Gastrocnemius medialis (tissue), 4 donors: ENCODE measurements at regions of chr1 and their contacts with region 1.

Region 1: DNA sequence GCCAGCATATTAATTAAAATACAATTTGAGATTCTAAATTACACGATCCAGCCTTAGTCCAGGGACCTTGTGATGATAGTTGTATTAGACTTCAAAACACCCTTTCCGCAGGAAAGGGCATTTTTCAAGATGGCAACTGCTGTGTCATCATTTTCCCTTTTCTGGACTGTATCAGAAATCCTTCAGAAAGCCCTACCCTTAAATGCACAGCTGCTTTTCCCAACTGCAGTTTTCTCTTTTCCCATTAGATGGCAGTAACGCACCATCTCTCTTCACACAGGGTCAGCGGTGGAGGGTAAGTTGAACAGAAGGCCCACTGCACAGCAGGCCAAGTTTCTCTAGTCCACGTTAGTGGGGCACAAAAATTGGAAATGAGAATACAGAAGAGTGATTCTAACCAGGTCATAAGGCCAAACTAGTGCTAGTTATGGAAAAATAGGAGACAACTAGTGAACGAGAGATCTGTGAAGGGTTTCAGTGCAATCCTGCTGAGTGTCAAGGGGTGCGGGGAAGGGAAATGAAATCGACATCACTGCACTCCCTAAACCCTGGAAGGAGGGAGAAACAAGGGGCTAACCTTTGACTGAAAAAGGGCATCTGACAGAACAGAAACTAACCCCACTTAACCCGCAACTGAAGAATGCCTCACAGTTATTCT is 22.1 kb upstream of the TDRD10 start:
- DNase-seq: peak in 1 of 2 donors; percentile 52
- ATAC-seq: peak; percentile 87 to 95
- H3K4me3 ChIP-seq: no peak overlapping the region
- H3K27ac ChIP-seq: no peak overlapping the region
- H3K4me1 ChIP-seq: peaks cover 0 to 11% of the 10 kb centered on the region in 2 donors
- H3K27me3 ChIP-seq: no peaks in the 10 kb centered on the region
- CTCF ChIP-seq: peak; percentile 79 to 94 (median 88)
- POLR2A ChIP-seq: no peak

Region 2: GRCh38 chr1:154304664-154305337 is 175.1 kb before region 1 on chr1:
- in situ Hi-C with region 1: no loop called
- intact Hi-C with region 1: no loop called
- DNase-seq: no peak
- ATAC-seq: no peak
- H3K4me3 ChIP-seq: no peak overlapping the region
- H3K27ac ChIP-seq: no peak overlapping the region
- H3K4me1 ChIP-seq: no peaks in the 10 kb centered on the region
- H3K27me3 ChIP-seq: no peaks in the 10 kb centered on the region
- CTCF ChIP-seq: no peak
- POLR2A ChIP-seq: no peak

Region 3: GRCh38 chr1:154546264-154547063 is 66.6 kb after region 1 on chr1:
- in situ Hi-C with region 1: loop called (anchors 5 to 10 kb)
- intact Hi-C with region 1: loop called (anchors 1 kb)
- DNase-seq: peak in 1 of 2 donors; percentile 43
- ATAC-seq: peak; percentile 48 to 86
- H3K4me3 ChIP-seq: no peak overlapping the region
- H3K27ac ChIP-seq: no peak overlapping the region
- H3K4me1 ChIP-seq: no peaks in the 10 kb centered on the region
- H3K27me3 ChIP-seq: no peaks in the 10 kb centered on the region
- CTCF ChIP-seq: peak; percentile 59 to 82 (median 63)
- POLR2A ChIP-seq: no peak

Region 4: GRCh38 chr1:154553056-154554030 is 73.5 kb after region 1 on chr1:
- in situ Hi-C with region 1: loop called (anchors 5 to 10 kb)
- intact Hi-C with region 1: no loop called
- DNase-seq: peak; percentile 30 to 48
- ATAC-seq: peak; percentile 72
- H3K4me3 ChIP-seq: no peak overlapping the region
- H3K27ac ChIP-seq: peak overlapping the region; percentile 34 to 63 (median 59)
- H3K4me1 ChIP-seq: peaks cover 32 to 36% of the 10 kb centered on the region in 2 donors
- H3K27me3 ChIP-seq: no peaks in the 10 kb centered on the region
- CTCF ChIP-seq: no peak
- POLR2A ChIP-seq: no peak

Region 5: DNA sequence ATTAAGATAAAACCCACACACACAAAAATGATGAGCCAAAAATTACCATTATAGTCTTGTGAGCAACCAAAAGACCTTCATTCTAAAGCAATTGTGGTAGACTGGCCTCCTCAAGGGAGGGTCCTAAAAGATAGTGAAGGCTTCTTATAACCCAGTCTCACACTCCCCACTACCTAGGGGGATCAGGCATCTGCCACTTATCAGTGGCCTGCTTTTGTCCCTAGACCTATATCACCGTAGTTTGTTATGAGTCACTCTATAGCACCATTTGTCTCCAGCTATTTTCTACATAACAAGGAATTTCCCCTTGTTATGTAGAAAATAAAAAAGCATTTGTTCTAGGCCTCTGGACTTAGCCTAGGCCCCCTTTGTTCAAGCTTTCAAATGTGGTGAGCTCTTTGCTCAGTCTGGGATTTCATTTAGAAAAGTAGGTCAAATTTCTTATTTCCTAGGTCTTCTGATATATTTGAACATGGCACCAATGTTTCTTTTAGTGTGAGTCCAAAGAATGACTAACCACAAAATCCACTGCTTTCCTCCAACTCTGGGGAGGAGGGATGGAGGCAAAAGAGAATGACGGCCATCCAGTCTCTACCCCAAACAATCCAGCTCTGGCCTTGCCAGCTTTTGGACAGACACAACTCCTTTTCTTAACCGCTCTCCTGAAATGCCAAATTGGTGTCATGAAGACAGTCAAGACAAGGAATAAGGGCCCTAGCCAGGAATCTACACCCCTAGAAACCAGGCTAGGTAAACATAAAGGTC is 119.2 kb after region 1 on chr1:
- in situ Hi-C with region 1: no loop called
- intact Hi-C with region 1: no loop called
- DNase-seq: no peak
- ATAC-seq: no peak
- H3K4me3 ChIP-seq: no peak overlapping the region
- H3K27ac ChIP-seq: no peak overlapping the region
- H3K4me1 ChIP-seq: peaks cover 11 to 22% of the 10 kb centered on the region in 2 donors
- H3K27me3 ChIP-seq: no peaks in the 10 kb centered on the region
- CTCF ChIP-seq: no peak
- POLR2A ChIP-seq: no peak

Region 6: GRCh38 chr1:154878371-154879022 is 398.6 kb after region 1 on chr1:
- in situ Hi-C with region 1: no loop called
- intact Hi-C with region 1: loop called (anchors 1 kb)
- DNase-seq: peak; percentile 65 to 79
- ATAC-seq: peak; percentile 80 to 84
- H3K4me3 ChIP-seq: no peak overlapping the region
- H3K27ac ChIP-seq: peak overlapping the region in 3 of 4 donors; percentile 29 to 69 (median 58)
- H3K4me1 ChIP-seq: peaks cover 3 to 4% of the 10 kb centered on the region in 2 donors
- H3K27me3 ChIP-seq: no peaks in the 10 kb centered on the region
- CTCF ChIP-seq: peak; percentile 82 to 96 (median 90)
- POLR2A ChIP-seq: no peak